Esophagus squamous epithelium (tissue), 5 donors: ENCODE measurements at regions of chr5 and their contacts with region 1.

Region 1: GRCh38 chr5:127492854-127493738 is 24.3 kb upstream of the PRRC1 start:
- DNase-seq: no peak
- H3K4me3 ChIP-seq: no peak overlapping the region
- H3K27ac ChIP-seq: no peak overlapping the region
- H3K4me1 ChIP-seq: no peaks in the 10 kb centered on the region
- H3K27me3 ChIP-seq: peaks cover 0 to 26% (median 0%) of the 10 kb centered on the region in 4 donors
- CTCF ChIP-seq: peak; percentile 56 to 76 (median 64)
- POLR2A ChIP-seq: no peak

Region 2: GRCh38 chr5:127011961-127012644 is 481.0 kb before region 1 on chr5:
- intact Hi-C with region 1: no loop called
- DNase-seq: no peak
- H3K4me3 ChIP-seq: no peak overlapping the region
- H3K27ac ChIP-seq: no peak overlapping the region
- H3K4me1 ChIP-seq: peaks cover 0 to 4% (median 0%) of the 10 kb centered on the region in 3 donors
- H3K27me3 ChIP-seq: no peaks in the 10 kb centered on the region
- CTCF ChIP-seq: no peak
- POLR2A ChIP-seq: no peak

Region 3: GRCh38 chr5:127254729-127255284 is 238.3 kb before region 1 on chr5:
- intact Hi-C with region 1: no loop called
- DNase-seq: no peak
- H3K4me3 ChIP-seq: no peak overlapping the region
- H3K27ac ChIP-seq: no peak overlapping the region
- H3K4me1 ChIP-seq: no peaks in the 10 kb centered on the region
- H3K27me3 ChIP-seq: no peaks in the 10 kb centered on the region
- CTCF ChIP-seq: no peak
- POLR2A ChIP-seq: no peak

Region 4: GRCh38 chr5:127313847-127314473 is 179.1 kb before region 1 on chr5:
- intact Hi-C with region 1: loop called (anchors 10 kb)
- DNase-seq: no peak
- H3K4me3 ChIP-seq: no peak overlapping the region
- H3K27ac ChIP-seq: no peak overlapping the region
- H3K4me1 ChIP-seq: no peaks in the 10 kb centered on the region
- H3K27me3 ChIP-seq: no peaks in the 10 kb centered on the region
- CTCF ChIP-seq: peak; percentile 45 to 77 (median 67)
- POLR2A ChIP-seq: no peak